Esophagus squamous epithelium (tissue), 5 donors: ENCODE measurements at regions of chr12 and their contacts with region 1.

Region 1: GRCh38 chr12:17853054-17853453 is 236.9 kb downstream of the RERGL start:
- DNase-seq: no peak
- H3K4me3 ChIP-seq: no peak overlapping the region
- H3K27ac ChIP-seq: no peak overlapping the region
- H3K4me1 ChIP-seq: no peaks in the 10 kb centered on the region
- H3K27me3 ChIP-seq: no peaks in the 10 kb centered on the region
- CTCF ChIP-seq: no peak
- POLR2A ChIP-seq: no peak

Region 2: DNA sequence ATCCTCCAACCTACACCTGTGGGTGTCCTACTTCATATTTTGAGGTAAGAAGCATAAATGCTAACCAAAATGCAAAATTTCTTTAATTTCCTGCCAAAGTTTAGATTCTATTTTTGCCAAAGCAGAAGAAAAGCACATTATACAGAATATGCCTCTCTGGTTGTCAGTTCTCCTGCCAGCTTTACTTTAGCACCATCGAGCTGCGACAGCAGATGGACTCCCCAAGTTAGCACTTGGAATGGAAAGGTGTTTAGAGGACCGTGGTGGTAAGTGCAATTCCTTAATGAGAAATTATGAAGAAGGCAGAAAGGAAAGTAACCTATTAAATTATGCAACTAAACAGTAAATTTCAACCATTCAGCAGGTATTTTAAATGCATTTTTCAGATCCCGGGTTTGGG is 89.7 kb before region 1 on chr12:
- intact Hi-C with region 1: loop called (anchors 5 kb)
- DNase-seq: no peak
- H3K4me3 ChIP-seq: no peak overlapping the region
- H3K27ac ChIP-seq: no peak overlapping the region
- H3K4me1 ChIP-seq: no peaks in the 10 kb centered on the region
- H3K27me3 ChIP-seq: no peaks in the 10 kb centered on the region
- CTCF ChIP-seq: no peak
- POLR2A ChIP-seq: no peak

Region 3: GRCh38 chr12:17802657-17803641 is 50.1 kb before region 1 on chr12:
- intact Hi-C with region 1: no loop called
- DNase-seq: no peak
- H3K4me3 ChIP-seq: no peak overlapping the region
- H3K27ac ChIP-seq: no peak overlapping the region
- H3K4me1 ChIP-seq: no peaks in the 10 kb centered on the region
- H3K27me3 ChIP-seq: no peaks in the 10 kb centered on the region
- CTCF ChIP-seq: no peak
- POLR2A ChIP-seq: no peak

Region 4: DNA sequence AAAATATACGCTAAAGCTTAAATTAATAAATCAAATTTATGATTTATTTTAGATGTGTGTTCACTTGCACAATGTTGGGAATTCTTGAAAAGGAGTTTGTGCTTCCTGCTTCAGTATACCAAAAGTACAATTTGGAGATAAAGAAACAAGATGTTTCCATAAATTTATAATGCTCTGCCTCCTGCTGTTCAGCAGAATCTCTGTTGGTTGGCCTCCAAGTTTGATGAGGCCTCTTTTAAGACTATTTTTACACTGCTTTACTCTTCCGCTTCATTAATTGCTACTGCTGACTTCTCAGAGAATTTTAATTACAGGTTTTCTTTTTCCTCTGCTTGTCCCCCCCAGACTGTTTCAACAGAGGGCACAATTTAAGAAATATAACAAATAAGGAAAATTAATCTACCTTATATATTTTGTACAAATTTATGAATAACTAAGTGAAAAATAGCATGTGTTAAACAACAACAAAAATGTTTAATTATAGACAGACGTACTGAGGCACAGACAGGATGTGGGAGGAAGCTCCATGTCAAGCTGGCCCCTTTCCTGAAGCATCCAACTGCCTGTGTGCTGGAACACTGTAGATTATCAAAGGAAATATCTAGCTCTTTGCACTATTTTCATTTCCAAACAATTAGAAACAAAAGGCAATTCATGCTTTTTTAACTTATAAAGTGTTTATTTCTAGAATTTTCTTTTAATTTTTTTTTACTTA is 492.1 kb after region 1 on chr12:
- intact Hi-C with region 1: no loop called
- DNase-seq: no peak
- H3K4me3 ChIP-seq: no peak overlapping the region
- H3K27ac ChIP-seq: no peak overlapping the region
- H3K4me1 ChIP-seq: no peaks in the 10 kb centered on the region
- H3K27me3 ChIP-seq: no peaks in the 10 kb centered on the region
- CTCF ChIP-seq: no peak
- POLR2A ChIP-seq: no peak